Cardiac septum (tissue), 1 donor: ENCODE measurements at regions of chr6 and their contacts with region 1.

Region 1: DNA sequence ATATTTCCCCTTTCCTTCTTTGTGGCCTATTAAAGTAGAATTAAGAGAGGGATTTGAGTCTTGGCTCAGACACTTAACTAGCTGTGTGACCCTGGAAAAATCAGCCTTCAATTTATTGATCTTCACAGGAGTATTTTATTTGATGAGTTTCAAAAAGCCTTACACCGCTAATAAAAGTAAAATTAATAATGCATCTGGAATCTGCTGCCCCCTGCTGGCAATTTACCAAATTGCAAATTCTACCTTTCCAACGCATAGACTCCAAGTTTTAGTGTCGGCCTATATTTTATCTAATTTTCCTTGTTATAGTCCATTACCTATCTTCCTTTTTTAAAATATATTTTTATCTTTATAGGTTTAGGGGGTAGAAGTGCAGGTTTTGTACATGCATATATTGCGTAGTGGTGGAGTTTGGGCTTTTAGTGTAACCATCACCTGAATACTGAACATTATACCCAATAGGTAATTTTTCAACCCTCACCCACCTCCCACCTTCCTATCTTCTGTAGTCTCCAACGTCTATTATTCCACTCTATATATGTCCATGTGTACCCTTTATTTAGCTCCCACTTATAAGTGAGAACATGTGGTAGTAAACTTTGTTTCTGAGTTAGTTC is 46.3 kb downstream of the GOPC start:
- DNase-seq: no peak

Region 2: GRCh38 chr6:117346142-117346930 is 209.7 kb before region 1 on chr6:
- intact Hi-C with region 1: loop called (anchors 5 kb)
- DNase-seq: no peak

Region 3: GRCh38 chr6:117449549-117450439 is 106.2 kb before region 1 on chr6:
- intact Hi-C with region 1: loop called (anchors 2 kb)
- DNase-seq: no peak

Region 4: GRCh38 chr6:117482240-117483003 is 73.6 kb before region 1 on chr6 and contains the start of gene DCBLD1:
- intact Hi-C with region 1: loop called (anchors 2 kb)
- DNase-seq: peak; percentile 89
- total RNA-seq, gene DCBLD1: 3.8 TPM

Region 5: GRCh38 chr6:117521791-117522502 is 34.0 kb before region 1 on chr6:
- intact Hi-C with region 1: no loop called
- DNase-seq: no peak